ENCODE measurements at regions of chr6 and their contacts with region 1.

Region 1: GRCh38 chr6:110528101-110528929 is 51.9 kb upstream of the SLC22A16 start:
- DNase-seq: peak; percentile 44 to 64 (median 55)
- H3K4me3 ChIP-seq: no peak overlapping the region
- H3K4me3 Mint-ChIP-seq: no peak overlapping the region
- H3K27ac ChIP-seq: no peak overlapping the region
- H3K27ac Mint-ChIP-seq: no peak overlapping the region
- H3K4me1 ChIP-seq: peaks cover 3 to 7% of the 10 kb centered on the region in 2 donors
- H3K4me1 Mint-ChIP-seq: peaks cover 18% of the 10 kb centered on the region
- H3K27me3 ChIP-seq: no peaks in the 10 kb centered on the region
- H3K27me3 Mint-ChIP-seq: peaks cover 0 to 2% (median 0%) of the 10 kb centered on the region in 3 donors
- CTCF ChIP-seq: peak; percentile 88

Region 2: GRCh38 chr6:110944681-110945151 is 416.4 kb after region 1 on chr6:
- intact Hi-C with region 1: loop called in 1 of 2 experiments (anchors 10 kb)
- DNase-seq: peak; percentile 91 to 99 (median 98)
- H3K4me3 ChIP-seq: no peak overlapping the region
- H3K4me3 Mint-ChIP-seq: peak overlapping the region in 1 of 2 donors; percentile 15
- H3K27ac ChIP-seq: peak overlapping the region; percentile 85 to 86
- H3K27ac Mint-ChIP-seq: peak overlapping the region; percentile 86 to 98 (median 94)
- H3K4me1 ChIP-seq: peaks cover 13 to 17% of the 10 kb centered on the region in 2 donors
- H3K4me1 Mint-ChIP-seq: peaks cover 13% of the 10 kb centered on the region
- H3K27me3 ChIP-seq: no peaks in the 10 kb centered on the region
- H3K27me3 Mint-ChIP-seq: peaks cover 0 to 2% (median 0%) of the 10 kb centered on the region in 3 donors
- CTCF ChIP-seq: no peak

Region 3: GRCh38 chr6:110999634-111000270 is 471.4 kb after region 1 on chr6:
- intact Hi-C with region 1: loop called in 1 of 2 experiments (anchors 10 kb)
- DNase-seq: no peak
- H3K4me3 ChIP-seq: no peak overlapping the region
- H3K4me3 Mint-ChIP-seq: no peak overlapping the region
- H3K27ac ChIP-seq: no peak overlapping the region
- H3K27ac Mint-ChIP-seq: no peak overlapping the region
- H3K4me1 ChIP-seq: no peaks in the 10 kb centered on the region
- H3K4me1 Mint-ChIP-seq: no peaks in the 10 kb centered on the region
- H3K27me3 ChIP-seq: no peaks in the 10 kb centered on the region
- H3K27me3 Mint-ChIP-seq: no peaks in the 10 kb centered on the region
- CTCF ChIP-seq: peak; percentile 51

Measured in CD14-positive monocyte (primary cell).